Activated CD4-positive, alpha-beta T cell treated with anti-CD3 and anti-CD28 coated beads for 36 hours (primary cell): ENCODE measurements at regions of chr11 and their contacts with region 1.

Region 1: GRCh38 chr11:64723117-64723906 is at the start of gene NRXN2:
- DNase-seq: peak; percentile 94
- ATAC-seq: peak; percentile 99
- H3K4me3 Mint-ChIP-seq: peak within 1 kb of the TSS; percentile 46
- H3K27ac Mint-ChIP-seq: no peak within 1 kb of the TSS
- H3K4me1 Mint-ChIP-seq: peaks cover 11% of the 10 kb centered on the region
- H3K27me3 Mint-ChIP-seq: peaks cover 19% of the 10 kb centered on the region
- total RNA-seq, gene NRXN2: 0.18 to 0.39 TPM

Region 2: DNA sequence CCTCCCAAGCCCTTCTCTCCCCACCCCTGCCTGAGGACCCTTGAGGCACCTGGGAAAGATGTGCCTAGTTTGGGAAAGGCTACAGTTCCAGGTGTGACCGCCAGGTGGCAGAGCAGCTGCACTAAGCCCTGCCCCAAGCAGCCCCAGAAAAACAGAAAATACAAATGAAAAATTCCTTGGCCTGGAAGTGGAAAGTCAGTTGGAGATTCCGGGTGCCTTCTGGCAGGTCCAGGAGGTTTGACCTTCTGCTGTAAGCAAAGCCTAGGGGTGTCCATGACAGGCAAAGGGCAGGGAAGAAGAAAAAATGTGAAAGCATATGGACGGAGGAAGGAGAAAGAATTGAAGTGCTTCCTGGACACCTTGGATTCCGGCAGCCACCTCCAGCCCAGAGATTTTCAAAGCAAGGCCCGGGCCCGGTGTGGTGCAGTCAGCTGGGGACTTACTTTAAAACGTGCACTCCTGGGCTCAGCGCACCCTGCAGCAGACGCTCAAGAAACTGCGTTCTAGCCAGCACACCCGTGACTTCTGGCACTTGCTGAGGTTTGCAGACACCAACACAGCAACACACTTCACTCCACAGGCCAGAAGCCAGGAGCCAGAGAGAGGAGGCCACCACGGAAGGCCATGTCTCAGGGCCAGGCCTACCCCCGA is 169.6 kb before region 1 on chr11:
- CTCF ChIA-PET with region 1: no interaction called
- POLR2A ChIA-PET with region 1: no interaction called
- intact Hi-C with region 1: loop called (anchors 1 kb)
- DNase-seq: peak; percentile 72
- ATAC-seq: peak; percentile 39
- H3K4me3 Mint-ChIP-seq: no peak overlapping the region
- H3K27ac Mint-ChIP-seq: no peak overlapping the region
- H3K4me1 Mint-ChIP-seq: no peaks in the 10 kb centered on the region
- H3K27me3 Mint-ChIP-seq: no peaks in the 10 kb centered on the region

Region 3: GRCh38 chr11:64638018-64638665 is 85.2 kb before region 1 on chr11:
- CTCF ChIA-PET with region 1: no interaction called
- POLR2A ChIA-PET with region 1: no interaction called
- intact Hi-C with region 1: no loop called
- DNase-seq: no peak
- ATAC-seq: no peak
- H3K4me3 Mint-ChIP-seq: no peak overlapping the region
- H3K27ac Mint-ChIP-seq: no peak overlapping the region
- H3K4me1 Mint-ChIP-seq: peaks cover 6% of the 10 kb centered on the region
- H3K27me3 Mint-ChIP-seq: peaks cover 16% of the 10 kb centered on the region

Region 4: DNA sequence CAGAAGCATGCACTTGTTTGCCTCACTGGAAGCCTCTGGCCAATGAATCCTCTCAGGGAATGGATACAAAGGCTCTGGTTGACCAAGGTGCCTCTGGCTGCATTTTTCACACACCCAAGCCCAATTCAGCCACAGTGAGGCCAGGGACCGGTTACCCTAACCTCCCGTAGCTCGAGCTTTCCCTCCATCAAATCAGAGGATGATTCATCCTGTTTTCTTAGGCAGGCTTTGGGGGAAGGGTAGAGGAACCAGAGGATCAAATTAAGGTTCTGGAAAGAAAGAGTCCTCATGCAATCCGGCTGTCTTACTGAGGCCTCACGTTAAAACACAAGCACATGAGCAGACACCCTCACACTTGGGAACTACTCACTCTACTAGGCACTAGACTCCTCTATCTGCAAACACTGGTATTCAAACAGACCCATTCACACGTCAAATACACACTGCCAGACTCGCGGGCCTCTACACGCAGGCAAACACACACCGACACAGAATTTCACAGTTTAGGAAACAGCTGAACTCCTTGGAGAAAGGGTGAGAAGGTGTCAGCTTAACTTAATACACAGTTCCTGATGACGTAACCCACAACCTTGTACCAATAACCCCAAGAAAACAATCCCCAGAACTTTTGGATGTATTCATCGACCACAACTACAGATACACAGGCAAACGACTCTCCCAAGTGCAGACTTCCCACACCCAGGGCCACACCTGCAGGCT is 12.7 kb before region 1 on chr11:
- CTCF ChIA-PET with region 1: interaction called, 3 read pairs
- POLR2A ChIA-PET with region 1: no interaction called
- intact Hi-C with region 1: loop called in 1 of 2 experiments (anchors 1 kb)
- DNase-seq: no peak
- ATAC-seq: no peak
- H3K4me3 Mint-ChIP-seq: no peak overlapping the region
- H3K27ac Mint-ChIP-seq: no peak overlapping the region
- H3K4me1 Mint-ChIP-seq: peaks cover 13% of the 10 kb centered on the region
- H3K27me3 Mint-ChIP-seq: peaks cover 59% of the 10 kb centered on the region